Uterus (tissue), 4 donors: ENCODE measurements at regions of chr4 and their contacts with region 1.

Region 1: GRCh38 chr4:87608229-87608628 is at the start of gene DSPP:
- DNase-seq: no peak
- H3K4me3 ChIP-seq: no peak within 1 kb of the TSS
- H3K27ac ChIP-seq: no peak within 1 kb of the TSS
- H3K4me1 ChIP-seq: no peaks in the 10 kb centered on the region
- H3K27me3 ChIP-seq: no peaks in the 10 kb centered on the region
- CTCF ChIP-seq: no peak
- POLR2A ChIP-seq: no peak
- total RNA-seq, gene DSPP: not detected

Region 2: GRCh38 chr4:89158884-89159503 is 1550.8 kb after region 1 on chr4:
- intact Hi-C with region 1: loop called (anchors 5 kb)
- DNase-seq: no peak
- H3K4me3 ChIP-seq: no peak overlapping the region
- H3K27ac ChIP-seq: no peak overlapping the region
- H3K4me1 ChIP-seq: no peaks in the 10 kb centered on the region
- H3K27me3 ChIP-seq: no peaks in the 10 kb centered on the region
- CTCF ChIP-seq: peak; percentile 42 to 67 (median 65)
- POLR2A ChIP-seq: no peak